Calu3 (cell line): ENCODE measurements at regions of chr1 and their contacts with region 1.

Region 1: GRCh38 chr1:151198255-151199127 is at the start of gene PIP5K1A:
- DNase-seq: peak; percentile 98
- H3K4me3 Mint-ChIP-seq: peak within 1 kb of the TSS; percentile 96
- H3K27ac Mint-ChIP-seq: peak within 1 kb of the TSS; percentile 95
- H3K4me1 Mint-ChIP-seq: peaks cover 31% of the 10 kb centered on the region
- H3K27me3 Mint-ChIP-seq: no peaks in the 10 kb centered on the region
- CTCF ChIP-seq: no peak
- total RNA-seq, gene PIP5K1A: 86.6 and 96.2 TPM in 2 replicates

Region 2: DNA sequence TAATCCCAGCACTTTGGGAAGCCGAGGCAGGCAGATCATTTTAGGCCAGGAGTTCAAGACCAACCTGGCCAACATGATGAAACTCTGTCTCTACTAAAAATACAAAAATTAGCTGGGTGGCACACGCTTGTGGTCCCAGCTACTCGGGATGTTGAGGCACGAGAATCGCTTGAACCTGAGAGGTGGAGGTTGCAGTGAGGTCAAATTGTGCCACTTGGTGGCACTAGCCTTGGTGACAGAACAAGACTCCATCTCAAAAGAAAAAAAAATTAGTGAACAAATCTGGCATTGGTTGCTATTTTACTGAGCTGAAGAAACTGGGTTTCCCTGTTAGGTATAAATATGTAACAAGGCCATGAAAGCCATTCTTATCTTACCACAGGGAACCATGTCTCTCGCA is 29.1 kb after region 1 on chr1:
- CTCF ChIA-PET with region 1: interaction called, 10 read pairs
- intact Hi-C with region 1: no loop called
- DNase-seq: no peak
- H3K4me3 Mint-ChIP-seq: no peak overlapping the region
- H3K27ac Mint-ChIP-seq: no peak overlapping the region
- H3K4me1 Mint-ChIP-seq: no peaks in the 10 kb centered on the region
- H3K27me3 Mint-ChIP-seq: no peaks in the 10 kb centered on the region
- CTCF ChIP-seq: no peak

Region 3: DNA sequence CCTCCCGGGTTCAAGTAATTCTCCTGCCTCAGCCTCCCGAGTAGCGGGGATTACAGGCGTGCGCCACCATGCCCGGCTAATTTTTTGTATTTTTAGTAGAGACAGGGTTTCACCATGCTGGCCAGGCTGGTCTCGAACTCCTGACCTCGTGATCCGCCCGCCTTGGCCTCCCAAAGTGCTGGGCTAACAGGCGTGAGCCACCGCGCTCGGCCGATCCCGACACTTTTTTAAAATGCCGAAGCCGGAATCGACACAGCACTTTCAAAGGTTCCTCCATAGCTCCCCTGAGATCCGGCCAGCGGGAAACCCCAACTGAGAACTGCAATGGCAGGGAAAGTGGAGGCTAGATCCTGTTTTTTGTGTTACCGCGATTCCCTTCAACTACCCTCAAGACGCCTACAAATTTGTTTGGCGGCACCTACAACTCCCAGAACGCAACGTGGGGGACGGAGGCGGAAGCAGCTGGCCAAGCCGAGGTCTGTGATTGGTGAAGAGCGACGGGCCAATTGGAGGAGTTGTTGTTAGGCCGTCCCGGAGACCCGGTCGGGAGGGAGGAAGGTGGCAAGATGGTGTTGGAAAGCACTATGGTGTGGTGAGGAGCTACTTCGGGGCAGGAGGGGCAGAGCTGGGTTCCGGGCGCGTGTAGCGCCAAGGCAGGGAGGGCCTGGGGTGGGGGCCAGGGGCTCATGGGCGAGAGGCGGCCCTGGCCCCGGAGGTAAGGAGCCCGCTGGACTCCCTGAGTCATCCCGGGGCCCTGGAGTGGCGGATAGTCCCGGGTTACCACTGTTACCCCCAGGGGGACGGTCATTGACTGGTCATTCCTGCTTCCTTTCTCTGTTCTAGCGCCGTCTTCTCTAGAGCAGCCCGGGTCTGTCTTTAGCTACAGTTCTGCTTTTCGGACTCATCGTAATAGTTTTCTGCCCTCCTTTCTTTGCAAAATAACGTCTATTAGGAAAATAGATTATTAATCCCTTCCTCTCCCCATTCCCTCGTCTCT is 56.0 kb after region 1 on chr1 and contains the start of gene PSMD4:
- CTCF ChIA-PET with region 1: interaction called, 9 read pairs
- intact Hi-C with region 1: loop called (anchors 1 kb)
- DNase-seq: peak; percentile 97
- H3K4me3 Mint-ChIP-seq: peak within 1 kb of the TSS; percentile 93
- H3K27ac Mint-ChIP-seq: peak within 1 kb of the TSS; percentile 100
- H3K4me1 Mint-ChIP-seq: peaks cover 8% of the 10 kb centered on the region
- H3K27me3 Mint-ChIP-seq: no peaks in the 10 kb centered on the region
- CTCF ChIP-seq: no peak
- total RNA-seq, gene PSMD4: 302 and 325 TPM in 2 replicates

Region 4: GRCh38 chr1:151340870-151341754 is 142.6 kb after region 1 on chr1:
- CTCF ChIA-PET with region 1: interaction called, 3 read pairs
- intact Hi-C with region 1: loop called (anchors 2 kb)
- DNase-seq: peak; percentile 72
- H3K4me3 Mint-ChIP-seq: no peak overlapping the region
- H3K27ac Mint-ChIP-seq: peak overlapping the region; percentile 3
- H3K4me1 Mint-ChIP-seq: peaks cover 3% of the 10 kb centered on the region
- H3K27me3 Mint-ChIP-seq: no peaks in the 10 kb centered on the region
- CTCF ChIP-seq: peak; percentile 46

Region 5: DNA sequence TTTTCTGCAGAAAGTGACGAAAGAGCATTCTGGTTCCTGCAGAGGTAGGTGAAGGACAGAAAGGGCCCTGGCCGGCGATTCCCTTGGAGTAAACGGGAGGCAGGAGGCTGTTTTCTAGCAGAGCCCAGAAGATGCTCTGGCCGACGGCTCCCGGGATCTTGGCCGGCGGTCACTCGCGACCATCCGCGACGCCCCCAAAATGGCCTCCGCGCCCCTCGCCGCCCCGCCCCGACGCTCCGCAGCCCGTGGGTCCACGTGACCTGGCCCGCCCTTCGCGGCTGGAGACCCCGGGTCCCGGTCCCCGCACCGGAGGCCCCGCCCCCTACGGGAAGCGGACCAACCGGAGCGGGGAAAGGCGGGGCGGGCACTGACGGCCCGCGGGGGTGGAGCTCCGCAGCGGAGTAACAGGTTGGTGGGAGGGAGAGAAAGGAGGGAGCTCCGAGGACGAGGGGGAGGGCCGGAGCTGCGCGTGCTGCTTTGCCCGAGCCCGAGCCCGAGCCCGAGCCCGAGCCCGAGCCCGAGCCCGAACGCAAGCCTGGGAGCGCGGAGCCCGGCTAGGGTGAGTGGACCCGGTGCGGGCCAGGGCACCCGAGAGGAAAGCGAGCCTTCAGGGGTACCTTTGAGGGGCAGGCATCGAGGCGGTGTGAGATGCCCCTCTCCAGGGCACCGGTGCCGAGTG is 312.6 kb after region 1 on chr1 and contains the start of gene CGN:
- CTCF ChIA-PET with region 1: no interaction called
- intact Hi-C with region 1: loop called (anchors 5 kb)
- DNase-seq: peak; percentile 98
- H3K4me3 Mint-ChIP-seq: peak within 1 kb of the TSS; percentile 76
- H3K27ac Mint-ChIP-seq: peak within 1 kb of the TSS; percentile 87
- H3K4me1 Mint-ChIP-seq: peaks cover 48% of the 10 kb centered on the region
- H3K27me3 Mint-ChIP-seq: no peaks in the 10 kb centered on the region
- CTCF ChIP-seq: no peak
- total RNA-seq, gene CGN: 113 and 131 TPM in 2 replicates